ENCODE measurements at regions of chr10 and their contacts with region 1.

Region 1: GRCh38 chr10:57472841-57473619 is 794.7 kb downstream of the IPMK start:
- DNase-seq: no peak

Region 2: DNA sequence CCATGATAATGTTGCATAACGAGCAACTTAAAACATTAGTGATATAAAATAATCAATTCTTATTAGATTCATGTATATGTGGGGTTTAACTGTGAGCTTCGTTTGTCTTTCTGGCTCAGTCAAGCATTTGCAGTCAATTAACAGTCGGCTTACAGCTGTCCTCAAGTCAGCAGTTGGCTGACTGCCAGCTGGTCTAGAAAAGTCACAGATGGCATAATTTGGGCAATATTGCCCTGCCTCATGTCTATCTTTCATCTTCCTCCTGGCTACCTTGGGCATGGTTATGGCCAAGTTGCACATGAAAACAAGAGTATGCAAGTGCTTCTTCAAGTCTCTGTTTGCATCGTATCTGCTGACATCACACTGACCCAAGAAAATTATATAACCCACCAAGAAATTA is 925.9 kb before region 1 on chr10:
- intact Hi-C with region 1: no loop called
- DNase-seq: no peak

Region 3: GRCh38 chr10:58044072-58044471 is 571.0 kb after region 1 on chr10:
- intact Hi-C with region 1: loop called in 1 of 2 experiments (anchors 5 kb)
- DNase-seq: no peak